Left cardiac atrium (tissue), 4 donors: ENCODE measurements at regions of chr5 and their contacts with region 1.

Region 1: GRCh38 chr5:176695073-176695472 is 47.8 kb downstream of the TSPAN17 start:
- DNase-seq: no peak
- ATAC-seq: peak; percentile 70 to 78

Region 2: GRCh38 chr5:176660860-176661641 is 34.0 kb before region 1 on chr5:
- intact Hi-C with region 1: no loop called
- DNase-seq: peak; percentile 80
- ATAC-seq: peak; percentile 69 to 78

Region 3: GRCh38 chr5:176677209-176678131 is 17.6 kb before region 1 on chr5:
- intact Hi-C with region 1: loop called in 1 of 2 experiments (anchors 1 kb)
- DNase-seq: peak; percentile 54
- ATAC-seq: peak; percentile 65 to 83

Region 4: GRCh38 chr5:177025101-177025601 is 330.1 kb after region 1 on chr5:
- intact Hi-C with region 1: no loop called
- DNase-seq: no peak
- ATAC-seq: no peak